HepG2 (cell line): ENCODE measurements at regions of chr2 and their contacts with region 1.

Region 1: GRCh38 chr2:112481050-112481527 is 867 bp upstream of the TTL start:
- DNase-seq: peak; percentile 76
- ATAC-seq: peak; percentile 91
- H3K4me3 ChIP-seq: peak overlapping the region; percentile 84 to 98 (median 97)
- H3K27ac ChIP-seq: peak overlapping the region; percentile 65
- H3K4me1 ChIP-seq: peaks cover 32% of the 10 kb centered on the region
- H3K27me3 ChIP-seq: no peaks in the 10 kb centered on the region; a peak in 1 of 5 replicates
- CTCF ChIP-seq: peak; percentile 97
- EP300 ChIP-seq: no peak
- POLR2A ChIP-seq: peak; percentile 28 to 29; a peak in 1 of 4 replicates
- RAD21 ChIP-seq: peak; percentile 89

Region 2: DNA sequence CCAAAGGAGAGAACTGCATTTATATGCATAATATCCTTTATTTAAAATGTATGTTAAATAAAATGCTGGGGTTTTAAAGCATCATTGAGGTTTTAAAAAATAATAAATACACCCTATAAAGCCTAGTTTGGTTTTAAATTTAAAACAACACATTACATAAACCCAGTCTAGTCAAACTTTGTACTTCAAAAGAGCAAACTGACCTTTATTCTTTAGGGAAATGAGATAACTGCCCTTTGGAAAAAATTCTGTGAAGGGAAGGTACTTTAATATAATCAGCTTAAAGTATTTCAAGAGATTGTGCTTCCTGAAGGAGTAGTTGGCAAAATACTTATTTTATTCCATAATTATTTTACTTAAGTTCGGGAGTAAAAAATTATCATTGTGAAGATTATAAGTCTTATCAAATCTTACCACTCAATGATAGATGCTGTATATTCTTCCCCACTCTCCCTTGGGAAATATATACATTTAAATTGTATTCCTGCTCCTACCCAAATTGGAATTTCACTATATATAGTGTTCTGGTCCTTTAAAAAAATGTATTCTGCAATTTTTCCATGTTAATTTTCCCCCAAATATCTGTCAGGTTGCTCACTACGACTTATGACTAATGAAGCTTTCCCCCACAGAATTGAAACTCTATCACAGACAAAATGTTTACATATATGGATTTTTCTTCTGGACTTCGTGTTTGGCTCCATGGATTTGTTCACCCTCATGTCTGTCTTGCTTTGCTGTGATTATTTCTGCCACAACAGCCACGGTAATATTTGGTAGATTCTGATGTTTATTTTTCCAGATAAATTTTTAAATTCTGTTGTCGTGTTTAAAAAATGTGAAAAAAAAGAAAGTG is 163.6 kb before region 1 on chr2:
- CTCF ChIA-PET with region 1: no interaction called
- POLR2A ChIA-PET with region 1: no interaction called
- in situ Hi-C with region 1: no loop called
- intact Hi-C with region 1: no loop called
- DNase-seq: peak; percentile 62
- ATAC-seq: peak; percentile 77
- H3K4me3 ChIP-seq: peak overlapping the region in 2 of 3 experiments; percentile 23 to 39; a peak in 3 of 6 replicates
- H3K27ac ChIP-seq: peak overlapping the region; percentile 82
- H3K4me1 ChIP-seq: peaks cover 74% of the 10 kb centered on the region
- H3K27me3 ChIP-seq: no peaks in the 10 kb centered on the region
- CTCF ChIP-seq: no peak
- EP300 ChIP-seq: peak in 1 of 2 experiments; percentile 86; a peak in 2 of 4 replicates
- POLR2A ChIP-seq: no peak
- RAD21 ChIP-seq: no peak

Region 3: DNA sequence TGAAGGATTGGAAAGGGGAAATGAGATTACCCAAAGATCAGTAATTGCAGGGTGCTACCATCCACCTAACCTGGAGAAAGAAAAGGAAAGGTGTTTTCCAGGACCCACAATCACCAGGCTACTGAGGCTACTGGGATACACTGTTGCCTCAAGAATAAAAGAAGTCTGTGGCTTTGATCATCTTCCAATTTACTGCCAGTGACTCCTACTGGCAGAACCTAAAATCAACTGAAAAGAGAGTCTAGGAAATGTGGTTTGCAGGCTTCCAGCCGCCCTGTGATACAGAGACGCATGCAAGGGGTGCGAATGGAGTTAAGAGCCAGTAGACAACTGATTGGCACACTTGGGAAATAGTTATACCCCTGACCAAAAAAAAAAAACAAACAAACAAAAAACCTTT is 15.7 kb before region 1 on chr2:
- CTCF ChIA-PET with region 1: no interaction called
- POLR2A ChIA-PET with region 1: no interaction called
- in situ Hi-C with region 1: no loop called
- intact Hi-C with region 1: no loop called
- DNase-seq: peak; percentile 24
- ATAC-seq: peak; percentile 54
- H3K4me3 ChIP-seq: no peak overlapping the region
- H3K27ac ChIP-seq: no peak overlapping the region
- H3K4me1 ChIP-seq: no peaks in the 10 kb centered on the region
- H3K27me3 ChIP-seq: peaks cover 0 to 4% of the 10 kb centered on the region in 2 experiments; a peak in 1 of 5 replicates
- CTCF ChIP-seq: peak; percentile 33
- EP300 ChIP-seq: no peak
- POLR2A ChIP-seq: no peak
- RAD21 ChIP-seq: no peak

Region 4: DNA sequence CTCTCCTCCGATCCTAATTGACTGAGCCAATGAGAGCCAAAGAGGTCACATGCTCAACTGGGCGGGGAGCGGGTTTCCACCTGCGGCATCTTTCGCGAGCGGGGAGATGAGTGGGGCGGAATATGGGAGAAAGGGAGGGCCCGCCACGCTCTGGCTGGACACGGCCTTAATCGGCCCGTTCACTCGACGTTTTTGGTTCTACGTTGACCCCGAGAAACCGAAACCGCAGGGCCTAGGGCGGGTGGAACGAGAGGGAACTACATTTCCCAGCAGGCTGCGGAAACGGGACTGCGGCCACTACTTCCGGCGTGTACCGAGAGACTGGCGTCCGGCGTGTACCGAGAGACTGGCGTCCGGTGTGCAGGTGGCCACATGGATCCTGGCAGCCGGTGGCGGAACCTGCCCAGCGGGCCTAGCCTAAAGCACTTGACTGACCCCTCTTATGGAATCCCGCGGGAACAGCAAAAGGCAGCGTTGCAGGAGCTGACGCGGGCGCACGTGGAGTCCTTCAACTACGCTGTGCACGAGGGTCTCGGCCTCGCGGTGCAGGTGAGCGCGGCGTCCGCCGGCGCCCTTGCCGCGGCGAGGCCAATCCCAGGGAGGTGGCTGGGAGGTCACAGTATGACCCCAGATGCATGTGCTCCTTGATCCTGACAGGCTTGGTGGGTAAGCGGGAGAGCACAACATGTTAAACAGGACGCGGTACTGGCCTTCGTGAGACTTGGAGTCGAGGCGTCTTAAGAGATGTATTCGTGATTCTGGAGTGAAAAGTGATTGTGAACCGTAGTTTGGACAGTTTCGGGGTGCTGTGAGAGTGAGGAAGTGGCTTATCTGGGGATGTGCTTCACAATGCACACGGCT is 61.3 kb after region 1 on chr2 and contains the start of gene POLR1B:
- CTCF ChIA-PET with region 1: no interaction called
- POLR2A ChIA-PET with region 1: interaction called, 3 read pairs
- in situ Hi-C with region 1: no loop called
- intact Hi-C with region 1: loop called (anchors 1 kb)
- DNase-seq: peak; percentile 89
- ATAC-seq: peak; percentile 93
- H3K4me3 ChIP-seq: peak within 1 kb of the TSS; percentile 73 to 96 (median 86)
- H3K27ac ChIP-seq: peak within 1 kb of the TSS; percentile 84
- H3K4me1 ChIP-seq: peaks cover 26% of the 10 kb centered on the region
- H3K27me3 ChIP-seq: no peaks in the 10 kb centered on the region; a peak in 1 of 5 replicates
- CTCF ChIP-seq: peak; percentile 34; the same call in 1 of the 2 replicates
- EP300 ChIP-seq: no peak; a peak in 1 of 4 replicates
- POLR2A ChIP-seq: peak; percentile 88 to 91
- RAD21 ChIP-seq: peak; percentile 44
- total RNA-seq, gene POLR1B: 46.0 and 70.8 TPM in 2 replicates

Region 5: GRCh38 chr2:112584134-112584890 is 103.2 kb after region 1 on chr2 and contains the start of gene CHCHD5:
- CTCF ChIA-PET with region 1: interaction called, 5 read pairs
- POLR2A ChIA-PET with region 1: interaction called, 7 read pairs
- in situ Hi-C with region 1: loop called (anchors 5 kb)
- intact Hi-C with region 1: loop called (anchors 1 kb)
- DNase-seq: peak; percentile 98
- ATAC-seq: peak; percentile 89
- H3K4me3 ChIP-seq: peak within 1 kb of the TSS; percentile 76 to 95 (median 87)
- H3K27ac ChIP-seq: peak within 1 kb of the TSS; percentile 97
- H3K4me1 ChIP-seq: peaks cover 40% of the 10 kb centered on the region
- H3K27me3 ChIP-seq: peaks cover 0 to 4% of the 10 kb centered on the region in 2 experiments; a peak in 1 of 5 replicates
- CTCF ChIP-seq: peak; percentile 60
- EP300 ChIP-seq: peak in 1 of 2 experiments; percentile 58; a peak in 3 of 4 replicates
- POLR2A ChIP-seq: peak; percentile 88 to 95
- RAD21 ChIP-seq: no peak; the same call in 1 of the 2 replicates
- total RNA-seq, gene CHCHD5: 22.8 and 23.9 TPM in 2 replicates

Region 6: DNA sequence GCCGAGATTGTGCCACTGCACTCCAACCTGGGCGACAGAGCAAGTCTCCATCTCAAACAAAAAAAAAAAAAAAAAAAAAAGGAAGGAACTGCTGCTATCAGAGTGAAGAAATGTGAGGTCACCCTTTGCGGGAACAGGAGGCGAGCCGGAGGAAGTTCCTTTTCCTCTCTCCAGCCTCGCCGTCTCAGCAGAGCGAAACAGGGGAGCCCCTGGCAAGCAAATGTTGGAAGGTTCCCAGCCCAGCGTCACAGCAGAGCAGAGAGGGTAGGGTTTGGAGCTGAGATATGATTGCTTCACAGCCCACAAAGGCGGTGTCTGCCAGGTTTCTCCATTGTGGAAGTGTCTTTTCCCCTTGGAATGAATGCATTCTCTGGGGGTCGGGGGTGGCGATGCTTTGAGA is 193.1 kb after region 1 on chr2:
- CTCF ChIA-PET with region 1: no interaction called
- POLR2A ChIA-PET with region 1: no interaction called
- in situ Hi-C with region 1: no loop called
- intact Hi-C with region 1: no loop called
- DNase-seq: no peak
- ATAC-seq: no peak
- H3K4me3 ChIP-seq: no peak overlapping the region
- H3K27ac ChIP-seq: no peak overlapping the region
- H3K4me1 ChIP-seq: peaks cover 18% of the 10 kb centered on the region
- H3K27me3 ChIP-seq: no peaks in the 10 kb centered on the region; a peak in 1 of 5 replicates
- CTCF ChIP-seq: no peak
- EP300 ChIP-seq: no peak
- POLR2A ChIP-seq: no peak
- RAD21 ChIP-seq: no peak

Region 7: GRCh38 chr2:113240150-113240862 is 759.2 kb after region 1 on chr2:
- CTCF ChIA-PET with region 1: no interaction called
- POLR2A ChIA-PET with region 1: no interaction called
- in situ Hi-C with region 1: no loop called
- intact Hi-C with region 1: no loop called
- DNase-seq: no peak
- ATAC-seq: peak; percentile 31
- H3K4me3 ChIP-seq: 0 out of 6 replicates have a peak overlapping the region, but pooled peaks of 1 of the 3 experiments have one; percentile 23
- H3K27ac ChIP-seq: no peak overlapping the region
- H3K4me1 ChIP-seq: peaks cover 68% of the 10 kb centered on the region
- H3K27me3 ChIP-seq: no peaks in the 10 kb centered on the region; a peak in 1 of 5 replicates
- CTCF ChIP-seq: no peak
- EP300 ChIP-seq: no peak
- POLR2A ChIP-seq: no peak
- RAD21 ChIP-seq: no peak